MCF 10A (cell line): ENCODE measurements at regions of chr1 and their contacts with region 1.

Region 1: GRCh38 chr1:150067184-150068036 is at the start of gene VPS45:
- DNase-seq: peak; percentile 95
- H3K4me3 Mint-ChIP-seq: peak within 1 kb of the TSS; percentile 91
- H3K27ac Mint-ChIP-seq: peak within 1 kb of the TSS; percentile 87
- H3K4me1 Mint-ChIP-seq: peaks cover 33% of the 10 kb centered on the region
- H3K27me3 Mint-ChIP-seq: no peaks in the 10 kb centered on the region
- CTCF ChIP-seq: no peak
- total RNA-seq, gene VPS45: 35.1 and 55.1 TPM in 2 replicates

Region 2: DNA sequence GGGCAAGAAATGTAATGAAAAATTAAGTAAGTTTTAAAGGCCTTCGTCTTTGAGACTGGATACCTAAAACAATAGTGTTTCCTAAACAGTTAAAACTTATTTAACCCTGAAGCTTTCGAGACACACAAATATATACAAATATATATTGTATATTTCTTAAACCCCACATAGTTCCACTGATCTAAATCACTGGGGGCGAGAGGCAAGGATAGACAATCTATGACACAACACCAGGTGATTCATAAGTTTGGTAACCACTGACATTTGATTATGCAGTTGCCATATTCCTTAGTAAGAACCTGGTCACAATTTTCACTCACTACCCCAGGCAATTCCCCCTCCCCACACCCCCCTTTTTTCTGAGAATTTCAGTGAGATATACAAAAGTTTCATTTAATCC is 223.3 kb before region 1 on chr1:
- CTCF ChIA-PET with region 1: no interaction called
- POLR2A ChIA-PET with region 1: interaction called, 19 read pairs
- intact Hi-C with region 1: no loop called
- DNase-seq: peak; percentile 80
- H3K4me3 Mint-ChIP-seq: peak overlapping the region; percentile 93
- H3K27ac Mint-ChIP-seq: peak overlapping the region; percentile 65
- H3K4me1 Mint-ChIP-seq: peaks cover 52% of the 10 kb centered on the region
- H3K27me3 Mint-ChIP-seq: no peaks in the 10 kb centered on the region
- CTCF ChIP-seq: no peak

Region 3: GRCh38 chr1:149937060-149937705 is 130.2 kb before region 1 on chr1:
- CTCF ChIA-PET with region 1: interaction called, 3 read pairs
- POLR2A ChIA-PET with region 1: interaction called, 28 read pairs
- intact Hi-C with region 1: no loop called
- DNase-seq: peak; percentile 96
- H3K4me3 Mint-ChIP-seq: peak overlapping the region; percentile 91
- H3K27ac Mint-ChIP-seq: peak overlapping the region; percentile 93
- H3K4me1 Mint-ChIP-seq: peaks cover 48% of the 10 kb centered on the region
- H3K27me3 Mint-ChIP-seq: no peaks in the 10 kb centered on the region
- CTCF ChIP-seq: peak; percentile 23

Region 4: DNA sequence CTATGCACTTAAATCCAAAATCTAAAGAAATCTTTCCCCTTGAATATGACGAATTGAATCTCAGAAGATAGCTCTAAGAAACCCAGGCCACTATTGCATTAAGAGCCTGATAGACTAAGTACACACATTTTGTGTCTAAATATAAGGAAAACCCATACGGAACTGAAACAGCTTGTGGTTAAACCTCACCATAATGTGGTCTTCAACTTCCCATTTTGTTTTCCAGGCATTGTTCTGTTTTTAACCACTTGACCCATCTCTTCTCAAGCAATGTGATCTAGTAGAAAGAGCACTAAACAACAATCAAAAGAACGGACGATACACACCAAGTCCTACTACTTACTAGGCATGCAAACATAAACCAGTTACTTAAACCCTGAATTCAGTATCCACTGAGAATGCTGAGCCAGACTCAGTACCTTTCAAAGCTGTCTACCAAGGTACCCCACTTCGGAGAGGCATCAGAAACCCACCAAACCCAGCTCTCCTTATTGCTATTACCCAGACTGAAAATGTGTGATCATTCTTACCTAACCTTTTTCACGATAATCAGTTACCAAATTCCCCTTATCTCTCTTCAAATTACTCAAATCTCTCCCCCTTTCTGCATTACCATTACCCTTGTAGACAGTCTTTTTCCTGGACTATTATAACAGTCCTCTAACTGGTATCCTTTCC is 69.7 kb before region 1 on chr1:
- CTCF ChIA-PET with region 1: no interaction called
- POLR2A ChIA-PET with region 1: interaction called, 29 read pairs
- intact Hi-C with region 1: no loop called
- DNase-seq: no peak
- H3K4me3 Mint-ChIP-seq: no peak overlapping the region
- H3K27ac Mint-ChIP-seq: no peak overlapping the region
- H3K4me1 Mint-ChIP-seq: peaks cover 43% of the 10 kb centered on the region
- H3K27me3 Mint-ChIP-seq: no peaks in the 10 kb centered on the region
- CTCF ChIP-seq: no peak

Region 5: GRCh38 chr1:150162862-150163706 is 95.7 kb after region 1 on chr1:
- CTCF ChIA-PET with region 1: interaction called, 90 read pairs
- POLR2A ChIA-PET with region 1: interaction called, 10 read pairs
- intact Hi-C with region 1: no loop called
- DNase-seq: peak; percentile 97
- H3K4me3 Mint-ChIP-seq: peak overlapping the region; percentile 69
- H3K27ac Mint-ChIP-seq: peak overlapping the region; percentile 84
- H3K4me1 Mint-ChIP-seq: peaks cover 14% of the 10 kb centered on the region
- H3K27me3 Mint-ChIP-seq: no peaks in the 10 kb centered on the region
- CTCF ChIP-seq: peak; percentile 25

Region 6: DNA sequence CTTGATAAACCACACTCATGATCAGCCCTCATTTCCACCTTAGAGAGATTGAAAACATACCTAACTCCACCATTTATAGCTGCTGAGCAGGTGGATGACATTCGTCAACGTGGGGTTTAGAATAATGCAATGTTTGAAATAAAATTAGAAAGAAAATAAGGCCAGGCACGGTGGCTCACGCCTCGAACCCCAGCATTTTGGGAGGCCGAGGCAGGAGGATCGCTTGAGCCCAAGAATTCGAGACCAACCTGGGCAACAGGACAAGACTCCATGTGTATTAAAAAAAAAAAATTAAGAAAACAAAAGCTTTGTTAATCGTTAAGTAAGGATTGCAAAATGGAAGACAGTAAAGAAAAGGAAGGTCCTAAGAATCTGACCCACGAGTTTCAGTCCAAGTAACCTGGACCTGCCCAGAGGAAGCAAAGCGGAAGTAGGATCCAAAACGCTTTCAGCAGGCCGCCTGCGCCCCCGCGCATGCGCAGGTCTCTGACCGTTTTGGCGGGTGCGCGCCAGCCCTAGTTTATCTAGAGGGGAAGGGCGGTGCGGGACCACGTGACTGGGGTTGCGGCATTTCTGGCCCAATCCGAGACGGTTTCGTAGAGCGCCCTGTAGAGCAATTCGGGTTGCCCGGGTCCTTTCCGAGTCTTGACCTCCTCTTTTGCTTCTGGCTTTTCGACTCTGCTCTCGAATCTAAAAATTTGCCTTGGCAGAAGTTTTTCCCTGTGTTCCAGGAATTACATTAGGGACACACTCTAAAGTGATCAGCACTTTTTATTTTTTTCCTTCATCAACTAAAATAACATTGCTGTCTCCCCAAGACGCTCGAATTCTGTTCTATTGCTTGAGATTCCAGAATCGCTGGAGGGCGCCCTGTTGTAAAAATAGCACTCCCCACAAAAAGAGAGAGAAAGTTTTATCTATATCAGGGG is 146.0 kb after region 1 on chr1:
- CTCF ChIA-PET with region 1: no interaction called
- POLR2A ChIA-PET with region 1: interaction called, 10 read pairs
- intact Hi-C with region 1: no loop called
- DNase-seq: peak; percentile 95
- H3K4me3 Mint-ChIP-seq: peak overlapping the region; percentile 77
- H3K27ac Mint-ChIP-seq: peak overlapping the region; percentile 91
- H3K4me1 Mint-ChIP-seq: peaks cover 12% of the 10 kb centered on the region
- H3K27me3 Mint-ChIP-seq: no peaks in the 10 kb centered on the region
- CTCF ChIP-seq: peak; percentile 19

Region 7: DNA sequence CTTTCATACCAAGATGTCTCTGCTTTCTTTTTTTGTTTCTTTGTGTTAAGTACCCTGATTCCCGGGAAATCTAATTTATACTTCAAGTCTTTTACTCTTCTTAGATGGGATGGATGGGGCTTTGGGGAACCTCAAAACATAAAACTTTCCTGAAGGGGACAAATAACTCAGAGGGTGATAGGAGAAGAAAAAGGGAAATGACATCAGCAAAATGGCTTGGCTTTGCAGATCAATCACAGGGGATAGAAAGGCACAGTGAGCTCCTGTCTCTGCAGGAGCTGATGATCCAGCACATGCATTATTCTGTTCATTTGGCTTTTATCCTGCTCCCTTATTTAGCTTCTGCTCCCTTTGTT is 188.8 kb after region 1 on chr1:
- CTCF ChIA-PET with region 1: no interaction called
- POLR2A ChIA-PET with region 1: no interaction called
- intact Hi-C with region 1: no loop called
- DNase-seq: no peak
- H3K4me3 Mint-ChIP-seq: peak overlapping the region; percentile 7
- H3K27ac Mint-ChIP-seq: no peak overlapping the region
- H3K4me1 Mint-ChIP-seq: peaks cover 51% of the 10 kb centered on the region
- H3K27me3 Mint-ChIP-seq: no peaks in the 10 kb centered on the region
- CTCF ChIP-seq: no peak

Region 8: DNA sequence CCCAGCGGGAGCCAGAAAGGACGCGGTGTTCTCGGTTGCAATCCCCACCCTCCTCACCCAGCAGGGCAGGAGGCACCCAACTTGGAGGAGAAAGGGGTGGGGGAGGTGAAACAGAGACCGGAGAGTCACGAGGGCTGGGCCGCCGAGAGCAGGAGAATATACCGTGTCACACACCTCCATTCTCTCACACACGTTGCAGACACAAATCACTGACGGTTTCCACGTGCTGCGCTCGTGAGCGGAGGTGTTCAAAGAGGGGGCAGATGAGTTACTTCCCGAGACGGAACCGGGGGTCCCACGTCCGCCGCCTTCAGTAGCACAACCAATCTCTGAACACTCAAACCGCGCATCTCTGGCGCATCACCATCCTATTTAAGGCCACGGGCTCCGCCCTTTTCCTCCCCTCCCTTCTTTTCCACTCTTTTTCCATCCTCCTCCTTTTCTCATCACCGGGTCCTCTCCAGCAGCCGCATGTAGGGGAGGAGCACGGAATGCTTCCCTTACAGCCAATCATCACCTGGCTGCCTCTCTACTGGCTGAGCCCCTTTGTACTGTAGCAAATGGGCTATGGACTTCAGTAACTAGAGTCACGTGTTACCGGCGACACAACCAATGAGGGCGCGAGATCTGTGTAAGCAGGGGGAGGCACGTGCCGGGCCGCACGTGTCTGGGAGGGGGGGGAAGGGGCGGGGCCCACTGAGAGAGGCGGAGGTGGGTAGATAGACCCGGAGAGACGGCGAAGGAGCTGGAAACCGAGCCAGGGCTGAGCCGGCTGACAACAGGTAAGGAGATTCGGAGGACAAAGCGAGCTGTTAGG is 214.6 kb after region 1 on chr1 and contains the start of gene CIART:
- CTCF ChIA-PET with region 1: interaction called, 3 read pairs
- POLR2A ChIA-PET with region 1: interaction called, 10 read pairs
- intact Hi-C with region 1: no loop called
- DNase-seq: peak; percentile 99
- H3K4me3 Mint-ChIP-seq: peak within 1 kb of the TSS; percentile 83
- H3K27ac Mint-ChIP-seq: peak within 1 kb of the TSS; percentile 94
- H3K4me1 Mint-ChIP-seq: peaks cover 43% of the 10 kb centered on the region
- H3K27me3 Mint-ChIP-seq: no peaks in the 10 kb centered on the region
- CTCF ChIP-seq: no peak
- total RNA-seq, gene CIART: 5.0 and 5.2 TPM in 2 replicates

Region 9: GRCh38 chr1:150444232-150444631 is 376.8 kb after region 1 on chr1:
- CTCF ChIA-PET with region 1: no interaction called
- POLR2A ChIA-PET with region 1: no interaction called
- intact Hi-C with region 1: no loop called
- DNase-seq: no peak
- H3K4me3 Mint-ChIP-seq: no peak overlapping the region
- H3K27ac Mint-ChIP-seq: no peak overlapping the region
- H3K4me1 Mint-ChIP-seq: no peaks in the 10 kb centered on the region
- H3K27me3 Mint-ChIP-seq: no peaks in the 10 kb centered on the region
- CTCF ChIP-seq: no peak

Region 10: GRCh38 chr1:150456146-150456647 is 388.8 kb after region 1 on chr1:
- CTCF ChIA-PET with region 1: no interaction called
- POLR2A ChIA-PET with region 1: no interaction called
- intact Hi-C with region 1: no loop called
- DNase-seq: no peak
- H3K4me3 Mint-ChIP-seq: no peak overlapping the region
- H3K27ac Mint-ChIP-seq: no peak overlapping the region
- H3K4me1 Mint-ChIP-seq: no peaks in the 10 kb centered on the region
- H3K27me3 Mint-ChIP-seq: no peaks in the 10 kb centered on the region
- CTCF ChIP-seq: no peak

Region 11: GRCh38 chr1:151594143-151594625 is 1526.8 kb after region 1 on chr1:
- CTCF ChIA-PET with region 1: no interaction called
- POLR2A ChIA-PET with region 1: no interaction called
- intact Hi-C with region 1: no loop called
- DNase-seq: peak; percentile 84
- H3K4me3 Mint-ChIP-seq: no peak overlapping the region
- H3K27ac Mint-ChIP-seq: no peak overlapping the region
- H3K4me1 Mint-ChIP-seq: peaks cover 21% of the 10 kb centered on the region
- H3K27me3 Mint-ChIP-seq: no peaks in the 10 kb centered on the region
- CTCF ChIP-seq: peak; percentile 99